Heart right ventricle (tissue), 16 donors: ENCODE measurements at regions of chr19 and their contacts with region 1.

Region 1: DNA sequence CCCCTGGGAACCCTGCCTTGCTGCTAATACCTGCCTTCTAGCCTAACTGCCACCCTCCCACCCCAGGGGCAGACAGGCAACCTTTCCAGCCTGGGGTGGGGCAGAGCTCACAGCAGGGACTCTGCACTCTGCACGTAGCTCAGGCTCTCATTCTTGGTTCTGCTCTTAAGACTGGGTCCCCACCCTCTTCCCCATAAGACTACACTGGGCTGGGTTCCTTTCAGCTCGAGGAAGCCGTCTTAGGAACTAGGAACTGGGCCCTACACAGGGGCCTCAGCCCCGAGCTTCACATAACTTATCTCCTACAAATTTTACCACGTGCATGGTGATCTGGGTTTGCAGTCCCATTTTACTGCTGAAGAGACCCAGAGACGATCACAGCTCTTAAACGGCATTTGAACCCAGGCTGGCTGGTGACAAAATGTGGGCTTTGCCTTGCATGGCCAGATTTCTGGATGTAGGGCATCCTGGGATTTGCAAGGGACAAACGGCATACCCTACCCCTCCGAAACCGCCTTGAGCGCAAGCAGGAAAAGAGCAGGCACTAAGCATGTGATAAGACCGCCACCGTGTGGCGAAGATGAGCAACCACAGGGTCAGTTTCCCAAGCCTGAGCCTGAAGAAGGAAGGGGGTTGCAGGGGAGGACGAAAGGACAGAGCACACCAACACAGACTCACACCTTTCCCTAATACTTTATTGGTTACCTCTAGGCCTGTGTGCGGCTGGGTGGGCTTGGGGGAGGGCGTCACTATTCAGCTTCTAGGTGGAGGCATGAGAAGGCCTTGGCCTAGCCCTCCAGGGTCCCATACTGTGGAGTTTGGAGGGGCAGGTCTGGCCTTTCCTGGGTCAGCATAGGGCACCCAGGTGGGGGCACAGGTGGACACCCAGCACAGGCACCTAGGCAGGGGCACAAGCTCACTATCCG is 5.1 kb downstream of the JUNB start:
- DNase-seq: peak; percentile 66 to 78
- ATAC-seq: peak in 5 of 8 donors; percentile 3 to 35 (median 29)
- H3K4me3 ChIP-seq: peak overlapping the region in 2 of 10 donors; percentile 1 to 17
- H3K27ac ChIP-seq: peak overlapping the region in 9 of 10 donors; percentile 13 to 100 (median 36)
- H3K4me1 ChIP-seq: peaks cover 0 to 46% (median 35%) of the 10 kb centered on the region in 9 donors
- H3K27me3 ChIP-seq: no peaks in the 10 kb centered on the region
- CTCF ChIP-seq: peak; percentile 88 to 95 (median 93)

Region 2: DNA sequence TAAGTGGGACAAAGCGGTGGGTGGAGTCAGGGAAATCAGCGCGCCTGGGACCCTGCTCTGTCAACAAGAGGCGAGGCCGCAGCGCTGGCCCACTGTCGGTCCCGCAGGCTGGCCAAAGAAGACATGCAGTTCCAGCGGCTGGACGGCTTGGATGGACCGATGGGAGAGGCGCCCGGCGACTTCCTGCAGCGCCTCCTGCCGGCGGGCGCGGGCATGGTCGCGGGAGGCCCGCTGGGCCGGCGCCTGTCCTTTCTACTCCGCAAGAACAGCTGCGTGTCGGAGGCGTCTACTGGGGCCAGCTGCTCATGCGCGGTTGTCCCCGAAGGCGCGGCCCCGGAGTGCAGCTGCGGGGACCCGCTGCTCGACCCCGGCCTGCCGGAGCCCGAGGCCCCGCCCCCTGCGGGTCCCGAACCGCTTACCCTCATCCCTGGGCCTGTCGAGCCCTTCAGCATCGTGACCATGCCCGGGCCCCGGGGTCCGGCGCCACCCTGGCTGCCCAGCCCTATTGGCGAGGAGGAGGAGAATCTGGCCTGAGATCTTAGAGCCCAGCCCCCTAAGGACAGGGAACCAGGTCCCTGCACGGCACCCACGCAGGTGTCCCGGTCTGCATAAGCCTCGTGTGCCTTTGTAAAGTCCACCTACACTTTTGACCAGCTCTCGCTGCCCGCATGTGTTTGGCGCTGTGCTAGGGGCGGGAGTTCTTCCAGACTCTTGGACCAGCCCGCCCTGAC is 38.7 kb before region 1 on chr19:
- intact Hi-C with region 1: loop called in 8 of 10 experiments (anchors 5 kb)
- DNase-seq: peak; percentile 60 to 73
- ATAC-seq: peak; percentile 73 to 86 (median 76)
- H3K4me3 ChIP-seq: peak overlapping the region in 9 of 10 donors; percentile 21 to 50 (median 42)
- H3K27ac ChIP-seq: peak overlapping the region; percentile 28 to 64 (median 52)
- H3K4me1 ChIP-seq: peaks cover 0 to 31% (median 12%) of the 10 kb centered on the region in 9 donors
- H3K27me3 ChIP-seq: peaks cover 0 to 13% (median 4%) of the 10 kb centered on the region in 7 donors
- CTCF ChIP-seq: peak; percentile 77 to 97 (median 92)

Region 3: GRCh38 chr19:12777217-12778016 is 19.0 kb before region 1 on chr19:
- intact Hi-C with region 1: loop called in 7 of 10 experiments (anchors 1 to 2 kb)
- DNase-seq: peak; percentile 80 to 87
- ATAC-seq: peak; percentile 39 to 69 (median 53)
- H3K4me3 ChIP-seq: peak overlapping the region; percentile 48 to 78 (median 70)
- H3K27ac ChIP-seq: peak overlapping the region; percentile 85 to 99 (median 97)
- H3K4me1 ChIP-seq: peaks cover 21 to 69% (median 49%) of the 10 kb centered on the region in 9 donors
- H3K27me3 ChIP-seq: no peaks in the 10 kb centered on the region
- CTCF ChIP-seq: peak; percentile 94 to 99 (median 98)

Region 4: GRCh38 chr19:12890787-12891552 is 94.6 kb after region 1 on chr19 and contains the start of gene GCDH:
- intact Hi-C with region 1: no loop called
- DNase-seq: peak; percentile 93 to 98
- ATAC-seq: peak; percentile 96 to 99 (median 99)
- H3K4me3 ChIP-seq: peak within 1 kb of the TSS; percentile 54 to 99 (median 90)
- H3K27ac ChIP-seq: peak within 1 kb of the TSS in 9 of 10 donors; percentile 54 to 85 (median 77)
- H3K4me1 ChIP-seq: peaks cover 6 to 20% (median 12%) of the 10 kb centered on the region in 9 donors
- H3K27me3 ChIP-seq: peaks cover 0 to 12% (median 5%) of the 10 kb centered on the region in 7 donors
- CTCF ChIP-seq: peak in 1 of 9 donors; percentile 10
- total RNA-seq, gene GCDH: 32.4 to 53.2 (median 45.1) TPM